ENCODE measurements at regions of chr1 and their contacts with region 1.

Region 1: DNA sequence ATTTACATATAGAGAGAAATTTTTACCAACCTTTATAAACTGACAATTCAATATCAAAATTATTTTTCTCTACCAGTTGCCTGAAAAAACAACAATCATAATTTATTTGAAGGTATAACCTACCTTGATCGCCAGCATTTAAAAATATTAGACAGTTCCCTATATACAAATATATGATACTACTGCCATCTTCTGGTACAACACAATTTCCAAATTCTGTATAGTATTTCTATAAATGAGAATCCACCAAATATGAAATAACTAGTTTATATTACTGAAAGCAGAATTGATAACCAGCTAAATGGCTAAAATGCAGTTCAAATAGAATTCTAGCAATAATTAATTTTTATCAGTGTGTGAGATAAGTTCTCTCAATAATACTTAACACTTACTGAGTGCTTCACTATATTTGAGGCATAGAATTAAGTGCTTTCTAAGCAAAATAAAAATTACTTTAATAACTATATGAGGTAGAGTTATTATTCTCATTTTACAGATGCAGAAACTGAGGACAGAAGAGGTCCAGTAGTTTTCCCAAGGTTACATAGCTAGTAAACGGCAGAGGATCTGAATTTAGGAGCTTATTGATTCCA is 75.6 kb downstream of the PIGK start:
- DNase-seq: peak; percentile 18
- H3K4me3 ChIP-seq: no peak overlapping the region
- H3K27ac ChIP-seq: no peak overlapping the region
- H3K4me1 ChIP-seq: peaks cover 4% of the 10 kb centered on the region
- H3K27me3 ChIP-seq: no peaks in the 10 kb centered on the region
- CTCF ChIP-seq: peak; percentile 63

Region 2: GRCh38 chr1:76154206-76154956 is 989.2 kb before region 1 on chr1:
- CTCF ChIA-PET with region 1: interaction called, 3 read pairs
- POLR2A ChIA-PET with region 1: no interaction called
- intact Hi-C with region 1: loop called (anchors 1 kb)
- DNase-seq: peak; percentile 80
- H3K4me3 ChIP-seq: peak overlapping the region; percentile 29
- H3K27ac ChIP-seq: no peak overlapping the region
- H3K4me1 ChIP-seq: no peaks in the 10 kb centered on the region
- H3K27me3 ChIP-seq: no peaks in the 10 kb centered on the region
- CTCF ChIP-seq: peak; percentile 98

Region 3: GRCh38 chr1:77416692-77417450 is 273.2 kb after region 1 on chr1:
- CTCF ChIA-PET with region 1: no interaction called
- POLR2A ChIA-PET with region 1: no interaction called
- intact Hi-C with region 1: loop called (anchors 5 kb)
- DNase-seq: peak; percentile 54
- H3K4me3 ChIP-seq: no peak overlapping the region
- H3K27ac ChIP-seq: no peak overlapping the region
- H3K4me1 ChIP-seq: peaks cover 9% of the 10 kb centered on the region
- H3K27me3 ChIP-seq: no peaks in the 10 kb centered on the region
- CTCF ChIP-seq: peak; percentile 67

Region 4: DNA sequence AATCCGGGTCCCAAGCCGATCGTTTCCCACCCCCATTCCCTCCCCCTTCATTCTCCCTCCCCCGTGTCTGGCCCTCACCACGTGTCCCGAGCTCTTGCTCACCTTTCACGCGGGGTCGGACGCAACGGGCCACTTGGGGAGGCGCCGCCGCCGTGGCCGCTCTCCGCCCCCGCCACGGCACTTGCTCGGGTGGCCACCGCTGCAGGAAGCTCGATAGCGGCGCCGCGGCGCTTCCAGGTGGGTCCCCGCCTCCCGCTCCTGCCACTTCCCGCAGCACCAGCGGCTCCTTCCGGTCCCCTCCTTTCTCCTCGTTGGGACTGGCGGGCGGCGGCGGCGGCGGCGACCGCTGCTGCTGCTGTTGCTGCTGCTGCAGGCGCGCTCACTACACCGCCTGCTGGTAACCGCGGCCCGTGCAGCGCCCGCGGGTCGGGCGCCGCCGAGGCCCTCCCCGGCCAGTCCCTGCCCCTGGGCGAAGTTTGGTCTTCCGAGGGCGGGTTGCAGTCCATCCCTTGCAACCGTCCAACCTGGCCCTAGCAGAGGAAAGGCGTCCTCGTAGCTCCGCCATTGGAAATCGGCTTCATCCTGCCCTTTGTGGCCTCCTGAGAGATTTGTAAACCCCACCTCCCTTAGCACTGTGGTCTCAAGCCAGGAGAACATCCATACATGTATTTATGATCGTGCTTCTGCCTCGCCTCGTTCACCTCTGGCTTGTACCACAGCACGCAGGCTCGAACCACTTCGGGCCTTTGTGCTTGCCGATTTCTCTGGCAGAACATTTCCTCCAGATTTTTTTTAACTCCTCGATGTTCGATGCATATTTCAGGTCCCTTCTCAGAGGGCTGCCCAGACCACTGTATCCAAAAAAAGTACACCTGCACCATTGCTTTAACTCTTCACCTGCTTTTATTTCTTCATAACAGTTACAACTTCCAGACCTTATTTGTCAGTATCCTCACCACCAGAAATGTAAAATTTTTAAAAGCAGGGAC is 539.8 kb after region 1 on chr1:
- CTCF ChIA-PET with region 1: no interaction called
- POLR2A ChIA-PET with region 1: no interaction called
- intact Hi-C with region 1: loop called (anchors 5 kb)
- DNase-seq: peak; percentile 95
- H3K4me3 ChIP-seq: peak overlapping the region; percentile 81
- H3K27ac ChIP-seq: peak overlapping the region; percentile 94
- H3K4me1 ChIP-seq: peaks cover 38% of the 10 kb centered on the region
- H3K27me3 ChIP-seq: no peaks in the 10 kb centered on the region
- CTCF ChIP-seq: peak; percentile 80